Activated B cell treated with CpG ODN at 0.5 μM for 24 hours (primary cell): ENCODE measurements at regions of chr17 and their contacts with region 1.

Region 1: GRCh38 chr17:32503251-32504165 is 16.7 kb downstream of the CDK5R1 start:
- DNase-seq: no peak
- ATAC-seq: peak; percentile 89
- H3K4me3 Mint-ChIP-seq: peak overlapping the region; percentile 68
- H3K27ac Mint-ChIP-seq: peak overlapping the region; percentile 92
- H3K4me1 Mint-ChIP-seq: peaks cover 53% of the 10 kb centered on the region
- H3K27me3 Mint-ChIP-seq: no peaks in the 10 kb centered on the region
- CTCF ChIP-seq: no peak

Region 2: DNA sequence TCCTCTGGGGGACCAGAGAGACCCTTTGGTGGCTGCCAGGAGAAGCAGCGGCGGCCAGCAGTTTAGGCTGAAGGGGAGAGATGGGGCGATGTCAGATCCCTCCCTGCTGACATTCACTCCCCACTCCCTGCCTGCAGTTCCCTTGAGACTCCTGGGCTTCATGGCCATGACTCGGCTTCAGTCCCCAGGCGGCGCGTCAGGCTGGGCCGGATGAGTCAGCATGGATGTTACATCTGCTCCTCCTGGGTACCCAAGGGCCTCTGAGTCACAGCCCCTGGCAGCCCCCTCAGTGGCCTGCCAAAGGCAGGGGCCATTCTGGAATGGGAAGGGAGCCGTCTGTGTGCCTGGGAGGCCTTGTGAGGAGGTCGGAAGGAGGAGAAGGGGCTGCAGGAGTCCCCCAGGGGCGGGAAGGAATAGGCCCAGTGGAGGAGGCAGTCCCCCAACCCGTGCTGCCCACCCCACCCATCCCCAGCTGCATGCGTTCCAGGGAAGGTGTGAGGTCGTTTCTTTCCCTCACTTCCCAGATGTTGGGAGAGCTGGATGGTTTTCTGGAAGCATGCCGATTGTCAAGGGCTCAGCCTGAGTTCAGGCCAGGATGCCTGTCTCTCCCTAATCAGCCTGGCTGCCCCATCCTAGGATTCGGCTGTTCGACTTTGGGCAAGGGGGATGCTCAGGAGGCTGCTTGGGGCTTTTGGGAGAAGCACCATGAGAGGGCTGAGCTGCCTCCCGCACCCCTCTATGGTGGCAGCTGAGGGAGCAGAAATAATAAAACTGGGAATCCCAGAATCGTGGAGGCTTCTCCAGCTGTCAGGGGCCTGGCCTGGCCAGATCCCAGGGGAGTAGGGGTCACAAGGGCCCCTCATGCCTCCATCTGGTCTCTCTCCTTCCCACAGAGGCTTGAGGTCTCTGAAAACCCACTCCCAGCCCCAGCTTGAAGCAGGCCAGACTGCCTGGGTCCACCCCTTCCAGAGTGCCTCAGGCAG is 228.2 kb before region 1 on chr17:
- CTCF ChIA-PET with region 1: no interaction called
- POLR2A ChIA-PET with region 1: no interaction called
- intact Hi-C with region 1: no loop called
- DNase-seq: no peak
- ATAC-seq: peak; percentile 81
- H3K4me3 Mint-ChIP-seq: no peak overlapping the region
- H3K27ac Mint-ChIP-seq: no peak overlapping the region
- H3K4me1 Mint-ChIP-seq: peaks cover 10% of the 10 kb centered on the region
- H3K27me3 Mint-ChIP-seq: peaks cover 36% of the 10 kb centered on the region
- CTCF ChIP-seq: no peak

Region 3: DNA sequence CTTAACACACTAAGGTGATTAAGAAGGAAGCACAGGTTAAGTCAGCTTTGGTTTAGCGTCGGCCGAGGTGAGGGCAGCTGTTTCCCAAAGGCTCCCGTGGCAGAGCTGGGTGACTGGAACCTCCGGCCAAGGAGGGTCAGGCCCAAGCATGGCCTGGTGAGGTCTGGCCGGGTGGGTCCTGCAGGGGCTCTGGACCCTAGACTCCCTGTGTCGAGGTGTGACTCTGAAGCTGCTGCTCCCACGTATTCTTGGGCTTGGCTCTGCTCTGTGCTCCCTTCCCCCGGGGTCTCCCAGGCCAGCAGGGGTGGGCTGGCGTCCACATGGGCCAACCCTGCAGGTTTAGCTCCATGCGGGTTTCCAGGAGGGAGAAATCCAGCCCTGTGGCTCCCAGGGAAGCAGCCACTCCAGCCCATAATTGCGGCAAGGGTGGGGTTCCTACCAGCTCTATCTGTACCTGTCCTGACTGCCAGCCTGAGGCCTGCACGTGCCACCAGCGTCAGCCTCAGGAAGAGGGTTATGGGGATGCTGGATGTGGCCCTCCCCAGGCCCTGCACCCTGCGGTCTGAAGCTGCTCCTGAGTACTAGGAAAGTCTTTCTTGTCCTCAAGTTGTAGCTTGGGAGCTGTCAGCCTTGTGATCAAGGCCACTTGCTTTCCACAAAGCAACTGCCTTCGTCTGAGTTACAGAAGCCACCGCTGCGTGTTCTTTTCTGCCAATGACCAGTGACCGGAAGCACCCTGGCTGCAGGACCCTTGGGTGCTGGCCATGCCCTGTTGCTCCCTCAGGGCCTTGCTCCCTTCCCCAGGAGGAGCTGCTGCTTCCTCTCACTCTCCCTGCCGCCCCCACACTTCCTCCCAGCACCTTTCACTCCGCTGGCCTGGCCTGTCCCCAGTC is 11.9 kb before region 1 on chr17:
- CTCF ChIA-PET with region 1: interaction called, 4 read pairs
- POLR2A ChIA-PET with region 1: interaction called, 14 read pairs
- intact Hi-C with region 1: loop called (anchors 1 kb)
- DNase-seq: no peak
- ATAC-seq: no peak
- H3K4me3 Mint-ChIP-seq: peak overlapping the region; percentile 67
- H3K27ac Mint-ChIP-seq: peak overlapping the region; percentile 85
- H3K4me1 Mint-ChIP-seq: peaks cover 77% of the 10 kb centered on the region
- H3K27me3 Mint-ChIP-seq: no peaks in the 10 kb centered on the region
- CTCF ChIP-seq: no peak

Region 4: DNA sequence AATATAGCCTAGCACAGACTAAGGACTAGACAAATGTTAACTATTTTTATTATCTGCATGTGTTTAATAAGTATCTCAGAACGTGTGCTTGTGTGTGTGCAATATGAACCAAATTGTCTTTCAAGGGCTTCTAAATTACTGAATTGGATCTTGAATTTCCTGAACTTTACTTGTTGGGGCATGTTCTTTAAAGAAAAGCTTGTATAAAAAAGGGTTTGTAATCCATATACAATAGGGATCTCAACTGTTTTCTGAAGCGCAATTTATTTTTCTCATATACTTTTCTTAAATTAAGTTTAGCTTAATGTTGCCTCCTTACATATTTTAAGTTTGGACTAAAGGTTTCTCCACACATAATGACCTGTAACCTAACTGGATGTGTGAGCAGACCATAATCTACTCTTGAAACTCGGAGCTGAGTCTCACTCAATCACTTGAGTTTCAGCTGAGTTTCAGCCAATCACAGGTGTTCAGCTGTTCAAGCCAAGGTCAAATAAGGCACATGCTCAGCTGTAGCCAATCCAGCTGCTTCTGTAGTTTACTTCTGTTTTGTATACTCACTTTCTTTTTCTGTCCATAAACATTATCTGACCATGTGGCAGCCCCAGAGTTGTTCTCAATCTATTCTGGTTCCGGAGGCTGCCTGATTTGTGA is 55.6 kb after region 1 on chr17:
- CTCF ChIA-PET with region 1: no interaction called
- POLR2A ChIA-PET with region 1: no interaction called
- intact Hi-C with region 1: loop called (anchors 5 kb)
- DNase-seq: no peak
- ATAC-seq: peak; percentile 64
- H3K4me3 Mint-ChIP-seq: peak overlapping the region; percentile 48
- H3K27ac Mint-ChIP-seq: peak overlapping the region; percentile 86
- H3K4me1 Mint-ChIP-seq: peaks cover 38% of the 10 kb centered on the region
- H3K27me3 Mint-ChIP-seq: no peaks in the 10 kb centered on the region
- CTCF ChIP-seq: no peak

Region 5: DNA sequence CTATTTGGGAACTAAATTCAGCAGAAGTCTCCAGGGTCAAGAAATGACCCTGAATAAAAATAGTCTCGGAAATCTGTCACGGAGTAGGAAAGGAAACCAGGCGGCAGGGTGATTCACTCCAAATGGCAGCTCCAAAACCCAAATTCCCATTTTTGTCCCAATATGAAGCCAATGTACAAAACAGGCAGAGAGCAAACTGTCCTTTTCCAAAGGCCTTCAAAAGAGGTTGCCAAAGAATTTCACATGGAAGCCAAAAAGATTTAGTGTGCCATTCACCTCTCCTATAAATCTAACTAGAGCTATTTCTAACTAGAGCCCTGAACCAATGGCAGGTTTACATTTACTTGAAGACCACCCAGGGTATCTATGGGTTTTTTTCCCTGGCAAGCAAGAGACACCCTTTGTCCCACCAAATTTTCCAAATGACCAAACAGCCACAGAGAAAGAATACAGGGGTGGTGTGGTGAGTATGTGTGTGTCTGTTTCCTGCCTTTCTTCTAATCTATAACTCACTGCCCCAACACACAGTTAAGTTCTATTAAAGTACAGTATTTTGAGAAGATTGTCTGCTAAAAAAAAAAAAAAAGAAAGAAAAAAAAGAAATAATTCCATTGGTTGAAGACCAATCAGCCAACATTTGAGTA is 366.6 kb after region 1 on chr17:
- CTCF ChIA-PET with region 1: no interaction called
- POLR2A ChIA-PET with region 1: no interaction called
- intact Hi-C with region 1: no loop called
- DNase-seq: no peak
- ATAC-seq: no peak
- H3K4me3 Mint-ChIP-seq: no peak overlapping the region
- H3K27ac Mint-ChIP-seq: no peak overlapping the region
- H3K4me1 Mint-ChIP-seq: peaks cover 16% of the 10 kb centered on the region
- H3K27me3 Mint-ChIP-seq: no peaks in the 10 kb centered on the region
- CTCF ChIP-seq: no peak